Ascending aorta (tissue), 2 donors: ENCODE measurements at regions of chr22 and their contacts with region 1.

Region 1: DNA sequence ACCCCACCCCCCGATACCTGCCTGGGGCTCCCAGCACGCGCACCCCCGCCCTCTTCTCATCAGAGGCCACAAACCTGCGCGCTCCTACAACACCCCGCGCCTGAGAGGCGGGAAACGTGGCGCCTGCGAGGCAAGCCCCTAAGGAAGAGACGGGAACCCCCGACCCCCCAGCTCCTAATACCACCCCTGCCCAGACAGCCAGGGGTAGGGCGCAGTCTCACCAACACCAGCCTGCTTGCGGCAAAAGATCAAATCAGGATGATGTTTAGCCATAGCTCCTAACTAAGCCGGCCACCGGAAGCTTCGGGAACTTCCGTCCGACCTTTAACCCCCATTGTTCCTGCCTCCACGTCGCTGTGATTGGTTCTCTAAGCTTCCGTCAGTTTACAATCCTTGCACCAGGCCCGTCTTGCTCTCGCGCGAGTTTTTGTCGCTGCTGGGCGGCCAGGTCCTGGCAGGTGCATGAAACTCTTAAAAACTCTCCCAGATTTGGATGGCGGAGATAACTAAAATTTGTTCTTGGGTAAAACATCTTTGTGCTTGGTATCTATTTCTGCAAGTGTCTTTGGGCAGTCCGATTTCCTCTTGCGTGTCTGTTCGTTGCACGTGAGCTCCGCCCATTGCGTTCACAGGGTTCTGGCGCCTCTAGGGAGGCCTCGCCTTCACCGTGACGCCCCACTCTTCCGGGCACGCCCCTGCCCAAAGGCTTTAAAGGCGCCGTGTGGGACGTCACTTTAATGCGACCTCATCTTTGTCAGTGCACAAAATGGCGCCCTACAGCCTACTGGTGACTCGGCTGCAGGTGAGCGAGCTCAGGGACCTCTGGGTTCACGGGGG is at the starts of genes ACO2 and PHF5A:
- DNase-seq: peak; percentile 87 to 98
- H3K4me3 ChIP-seq: peak within 1 kb of the TSS; percentile 94 to 97
- H3K27ac ChIP-seq: peak within 1 kb of the TSS; percentile 93 to 96
- H3K4me1 ChIP-seq: peaks cover 3 to 17% of the 10 kb centered on the region in 2 donors
- H3K27me3 ChIP-seq: no peaks in the 10 kb centered on the region
- CTCF ChIP-seq: no peak
- total RNA-seq, gene ACO2: 81.1 TPM
- total RNA-seq, gene PHF5A: 4.8 TPM

Region 2: DNA sequence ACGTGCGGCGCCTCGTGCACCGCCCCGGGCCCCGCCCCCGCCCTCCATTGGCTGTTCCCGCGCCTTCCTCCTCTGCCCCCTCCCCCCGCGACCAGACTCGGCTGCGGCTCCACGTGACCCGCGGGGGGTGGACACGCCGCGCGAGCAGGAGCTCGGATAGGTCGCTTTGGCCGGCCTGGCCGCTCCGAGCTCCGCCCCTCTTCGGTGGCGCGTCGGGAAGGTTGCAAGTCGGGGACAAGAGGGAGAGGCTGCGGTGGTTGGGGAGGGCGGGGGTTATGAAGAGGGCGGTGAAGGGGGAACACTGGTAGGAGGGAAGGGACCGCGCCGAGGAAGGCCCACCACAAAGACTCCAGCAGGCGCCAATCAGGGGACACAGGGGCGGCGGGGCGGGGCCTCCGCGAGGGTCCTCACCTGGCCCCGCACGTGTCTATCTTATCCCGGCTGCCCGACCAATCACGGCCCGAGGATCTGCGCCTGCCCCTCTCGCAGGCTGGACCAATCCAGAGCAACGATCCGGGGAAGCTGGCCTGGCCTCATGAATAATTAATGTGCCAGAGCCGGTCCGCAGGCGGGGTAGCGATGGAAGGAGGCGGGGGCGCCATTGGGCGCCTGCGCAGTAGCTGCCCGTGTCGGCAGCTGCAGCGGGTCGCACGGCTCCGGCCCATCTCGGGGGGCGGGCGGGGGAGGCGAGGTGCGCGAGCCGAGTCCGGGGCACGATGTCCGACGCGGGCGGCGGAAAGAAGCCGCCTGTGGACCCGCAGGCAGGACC is 87.1 kb before region 1 on chr22 and contains the start of gene TEF:
- intact Hi-C with region 1: loop called (anchors 1 kb)
- DNase-seq: peak; percentile 97 to 99
- H3K4me3 ChIP-seq: peak within 1 kb of the TSS; percentile 79 to 87
- H3K27ac ChIP-seq: peak within 1 kb of the TSS; percentile 93 to 96
- H3K4me1 ChIP-seq: peaks cover 3 to 19% of the 10 kb centered on the region in 2 donors
- H3K27me3 ChIP-seq: no peaks in the 10 kb centered on the region
- CTCF ChIP-seq: no peak
- total RNA-seq, gene TEF: 20.2 TPM

Region 3: DNA sequence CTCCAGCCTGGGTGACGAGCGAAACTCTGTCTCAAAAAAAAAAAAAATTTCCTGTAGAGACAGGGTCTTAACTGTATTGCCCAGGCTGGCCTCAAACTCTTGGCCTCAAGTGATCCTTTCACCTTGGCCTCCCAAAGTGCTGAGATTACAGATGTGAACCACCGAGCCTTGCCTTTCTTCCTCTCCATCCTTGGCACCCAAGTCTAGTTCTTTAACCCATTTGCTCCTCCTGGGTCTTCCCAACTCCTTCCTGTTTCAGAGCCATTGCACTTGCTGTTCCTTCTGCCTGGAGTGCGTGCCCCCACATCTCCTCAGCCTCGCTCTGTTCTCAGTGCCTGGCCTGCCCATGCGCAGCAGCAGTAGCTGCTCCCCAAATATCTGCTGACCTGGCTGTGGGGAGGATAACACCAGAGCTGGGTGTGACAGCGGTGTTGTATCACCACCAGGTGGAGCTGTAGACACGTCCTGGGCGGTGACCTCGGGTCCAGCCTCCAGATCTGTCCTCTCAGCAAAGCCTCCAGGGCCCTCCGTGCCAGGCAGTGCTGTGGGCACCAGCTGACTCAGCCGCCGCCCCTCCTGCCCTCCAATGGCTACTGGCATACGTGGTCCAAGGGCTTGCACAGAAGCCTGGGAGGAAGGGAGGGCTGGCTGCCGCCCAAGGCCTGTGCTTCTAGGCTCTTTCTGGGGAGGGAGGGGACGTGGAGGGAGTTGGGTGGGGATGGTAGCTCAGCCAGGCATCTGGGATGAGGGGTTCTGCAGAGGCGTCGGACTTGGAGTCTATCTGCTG is 64.9 kb before region 1 on chr22:
- intact Hi-C with region 1: loop called (anchors 1 kb)
- DNase-seq: peak; percentile 95 to 99
- H3K4me3 ChIP-seq: no peak overlapping the region
- H3K27ac ChIP-seq: peak overlapping the region; percentile 43 to 61
- H3K4me1 ChIP-seq: peaks cover 0 to 10% of the 10 kb centered on the region in 2 donors
- H3K27me3 ChIP-seq: no peaks in the 10 kb centered on the region
- CTCF ChIP-seq: peak; percentile 95 to 99 (median 98)

Region 4: GRCh38 chr22:41417622-41418390 is 50.8 kb before region 1 on chr22:
- intact Hi-C with region 1: loop called (anchors 2 kb)
- DNase-seq: peak; percentile 85 to 98
- H3K4me3 ChIP-seq: peak overlapping the region; percentile 25 to 32
- H3K27ac ChIP-seq: peak overlapping the region; percentile 96 to 99
- H3K4me1 ChIP-seq: peaks cover 8 to 34% of the 10 kb centered on the region in 2 donors
- H3K27me3 ChIP-seq: no peaks in the 10 kb centered on the region
- CTCF ChIP-seq: peak in 1 of 3 experiments; percentile 6